Endothelial cell of umbilical vein (primary cell): ENCODE measurements at regions of chr6 and their contacts with region 1.

Region 1: DNA sequence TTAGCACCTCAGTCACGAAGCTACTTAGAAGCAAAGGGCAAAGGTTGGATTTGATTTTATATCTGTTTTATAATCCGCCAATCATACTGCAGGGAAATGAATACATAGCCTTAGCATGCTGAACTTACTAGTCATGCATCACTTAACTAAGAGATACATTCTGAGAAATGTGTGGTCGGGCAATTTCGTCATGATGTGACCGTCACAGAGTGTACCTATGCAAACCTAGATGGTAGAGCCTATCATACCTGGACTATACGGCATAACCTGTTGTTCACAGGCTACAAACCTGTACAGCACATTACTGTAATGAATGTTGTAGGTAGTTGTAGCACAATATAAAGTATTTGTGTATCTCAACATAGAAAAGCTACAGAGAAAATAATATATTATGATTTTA is 345.2 kb upstream of the RGS17 start:
- DNase-seq: no peak
- H3K4me3 ChIP-seq: no peak overlapping the region
- H3K27ac ChIP-seq: no peak overlapping the region
- H3K4me1 ChIP-seq: no peaks in the 10 kb centered on the region
- H3K27me3 ChIP-seq: no peaks in the 10 kb centered on the region
- CTCF ChIP-seq: no peak
- POLR2A ChIP-seq: no peak

Region 2: DNA sequence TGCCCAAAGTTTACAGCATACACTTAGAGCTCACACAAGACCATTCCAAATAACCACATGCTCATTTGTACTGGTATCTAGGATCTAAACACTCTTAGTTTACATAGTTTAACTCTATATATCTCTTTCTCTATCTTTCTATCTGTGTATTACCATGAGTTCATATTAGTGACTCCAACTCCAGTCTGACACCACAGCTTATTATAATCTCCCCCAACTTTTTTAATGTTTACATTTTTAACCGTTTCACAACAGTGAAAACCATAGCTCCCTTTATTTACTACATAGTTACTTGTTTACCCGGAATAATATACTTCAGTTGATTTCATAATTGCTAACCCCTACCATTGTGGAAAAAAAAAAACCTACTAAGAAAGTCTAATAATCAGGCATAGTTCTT is 17.3 kb after region 1 on chr6:
- CTCF ChIA-PET with region 1: no interaction called
- POLR2A ChIA-PET with region 1: no interaction called
- dilution Hi-C with region 1: no loop called
- intact Hi-C with region 1: loop called (anchors 1 kb)
- DNase-seq: no peak
- H3K4me3 ChIP-seq: no peak overlapping the region
- H3K27ac ChIP-seq: no peak overlapping the region
- H3K4me1 ChIP-seq: no peaks in the 10 kb centered on the region
- H3K27me3 ChIP-seq: no peaks in the 10 kb centered on the region
- CTCF ChIP-seq: no peak
- POLR2A ChIP-seq: no peak